ENCODE measurements at regions of chr12 and their contacts with region 1.

Region 1: DNA sequence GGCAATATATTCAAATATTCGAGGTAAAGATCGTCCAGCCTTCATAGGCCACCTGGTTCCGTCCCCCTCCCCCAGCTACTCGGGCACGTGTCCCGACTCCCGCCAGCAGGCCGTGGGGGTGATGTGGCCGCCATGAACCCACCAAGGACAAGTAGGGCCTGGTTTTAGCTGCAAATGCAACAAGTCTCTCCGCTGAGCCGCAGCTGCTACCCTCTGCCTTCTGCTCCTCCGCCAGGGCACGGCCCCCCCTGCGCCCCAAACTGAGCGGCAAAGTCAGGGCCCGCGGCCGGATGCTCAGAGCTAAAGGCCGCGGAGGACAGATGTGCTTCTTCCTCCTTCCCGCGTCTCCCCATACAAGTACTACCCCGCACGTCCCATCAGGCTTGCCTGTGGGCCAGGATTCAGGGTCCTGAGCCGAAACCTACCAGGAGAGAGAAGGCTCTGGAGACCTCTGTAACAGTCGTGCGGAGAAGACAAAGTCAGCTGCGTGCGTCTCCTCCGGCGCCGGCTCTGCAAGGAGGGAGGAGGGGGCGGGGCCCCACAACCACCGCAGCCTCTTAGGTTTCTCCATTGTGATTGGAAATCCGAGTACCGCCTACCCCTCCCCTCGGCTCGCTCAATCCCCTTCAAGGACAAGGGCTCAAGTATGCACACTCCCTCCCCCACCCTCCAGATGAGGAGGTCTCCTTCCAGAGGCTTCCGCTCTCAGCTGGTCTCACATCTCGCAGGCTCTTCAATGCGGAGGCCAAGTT is at the start of gene LDHB:
- DNase-seq: peak; percentile 97
- H3K4me3 ChIP-seq: peak within 1 kb of the TSS; percentile 83 to 89 (median 85)
- H3K27ac ChIP-seq: peak within 1 kb of the TSS; percentile 83
- H3K4me1 ChIP-seq: peaks cover 14% of the 10 kb centered on the region
- H3K27me3 ChIP-seq: peaks cover 2 to 9% of the 10 kb centered on the region in 2 experiments
- CTCF ChIP-seq: no peak
- POLR2A ChIP-seq: peak; percentile 98
- total RNA-seq, gene LDHB: 670 and 703 TPM in 2 replicates

Region 2: DNA sequence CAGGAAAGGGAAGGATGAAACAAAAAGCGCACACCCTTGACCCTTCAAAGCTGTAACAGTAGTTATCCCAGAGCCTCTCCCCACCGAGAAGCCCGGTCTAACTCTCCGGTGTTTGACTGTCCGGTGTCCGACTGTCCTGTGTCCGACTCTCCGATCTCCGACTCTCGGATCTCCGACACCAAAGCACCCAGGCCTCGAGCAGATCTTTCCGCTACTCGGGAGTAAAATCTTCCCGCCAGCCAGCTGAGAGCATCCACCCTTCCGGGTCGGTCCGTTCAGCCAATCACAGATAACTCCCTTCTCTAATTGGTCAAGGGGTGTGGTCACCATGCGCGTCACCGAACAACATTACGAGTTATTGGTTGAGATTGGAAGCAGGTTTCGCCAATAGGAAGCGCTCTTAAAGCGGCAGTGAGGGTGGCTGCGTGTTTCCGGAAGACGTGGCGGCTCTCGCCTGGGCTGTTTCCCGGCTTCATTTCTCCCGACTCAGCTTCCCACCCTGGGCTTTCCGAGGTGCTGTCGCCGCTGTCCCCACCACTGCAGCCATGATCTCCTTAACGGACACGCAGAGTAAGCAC is 156.0 kb before region 1 on chr12 and contains the starts of genes GOLT1B and RECQL:
- CTCF ChIA-PET with region 1: no interaction called
- POLR2A ChIA-PET with region 1: interaction called, 4 read pairs
- dilution Hi-C with region 1: no loop called
- intact Hi-C with region 1: loop called (anchors 1 kb)
- DNase-seq: peak; percentile 99
- H3K4me3 ChIP-seq: peak within 1 kb of the TSS; percentile 80 to 92 (median 88)
- H3K27ac ChIP-seq: peak within 1 kb of the TSS; percentile 87
- H3K4me1 ChIP-seq: peaks cover 31% of the 10 kb centered on the region
- H3K27me3 ChIP-seq: no peaks in the 10 kb centered on the region
- CTCF ChIP-seq: no peak
- POLR2A ChIP-seq: peak; percentile 90
- total RNA-seq, gene GOLT1B: 50.5 and 59.4 TPM in 2 replicates
- total RNA-seq, gene RECQL: 50.3 and 51.4 TPM in 2 replicates

Region 3: DNA sequence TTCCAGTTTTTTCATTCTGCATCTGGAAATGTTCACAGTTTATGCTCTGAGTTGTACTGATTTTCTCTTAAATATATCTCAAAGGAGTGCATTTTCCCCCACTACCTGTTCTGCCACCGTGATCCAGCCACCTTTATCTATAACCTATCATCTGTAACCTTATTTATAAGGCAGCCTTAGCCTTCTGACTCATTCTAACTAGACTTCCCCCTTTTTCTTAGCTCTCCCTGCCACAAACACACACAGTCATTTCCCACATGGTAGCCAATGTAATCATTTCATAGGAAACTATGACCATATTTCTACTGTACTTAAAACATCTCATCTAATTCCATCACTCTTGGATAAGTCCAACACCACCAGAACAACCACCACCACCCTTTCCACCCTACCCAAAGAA is 42.1 kb before region 1 on chr12:
- CTCF ChIA-PET with region 1: no interaction called
- POLR2A ChIA-PET with region 1: no interaction called
- dilution Hi-C with region 1: no loop called
- intact Hi-C with region 1: loop called (anchors 1 kb)
- DNase-seq: peak; percentile 92
- H3K4me3 ChIP-seq: no peak overlapping the region
- H3K27ac ChIP-seq: peak overlapping the region; percentile 37
- H3K4me1 ChIP-seq: peaks cover 22% of the 10 kb centered on the region
- H3K27me3 ChIP-seq: no peaks in the 10 kb centered on the region
- CTCF ChIP-seq: no peak
- POLR2A ChIP-seq: no peak

Region 4: DNA sequence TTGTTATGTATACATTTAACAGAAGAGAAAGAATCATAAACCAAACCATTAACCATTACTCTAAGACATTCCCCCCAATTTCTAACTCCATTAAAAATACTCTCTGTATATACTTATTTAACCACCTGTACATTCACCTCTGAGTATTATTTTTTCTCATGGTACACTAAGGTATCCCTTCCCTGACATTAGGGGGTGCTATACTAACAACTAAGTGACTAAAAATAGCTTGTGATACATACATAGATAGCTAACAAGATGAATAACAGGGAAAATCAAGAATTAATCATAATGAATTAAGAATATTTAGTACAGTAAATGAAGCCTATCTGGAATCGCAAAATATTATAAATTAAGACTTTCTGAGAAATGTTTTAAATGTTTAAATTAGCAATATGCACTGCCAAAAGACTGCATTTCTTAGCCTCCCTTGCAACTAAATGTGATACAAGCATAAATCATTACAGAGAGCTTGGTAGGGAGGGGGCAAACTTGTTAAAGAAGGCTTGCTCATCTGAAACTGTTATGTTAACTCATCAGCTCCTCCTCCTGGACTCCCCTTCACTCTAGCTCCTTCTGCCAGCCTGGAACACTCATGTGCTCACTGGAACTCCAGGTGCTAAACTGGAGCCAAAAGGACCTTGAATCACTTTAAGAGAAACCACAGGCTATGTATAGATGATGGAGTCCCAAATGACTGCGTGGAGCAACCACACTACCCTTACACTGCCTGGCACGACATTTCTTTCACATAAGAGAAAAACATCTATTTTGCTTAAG is 872.0 kb after region 1 on chr12:
- CTCF ChIA-PET with region 1: no interaction called
- POLR2A ChIA-PET with region 1: no interaction called
- dilution Hi-C with region 1: no loop called
- intact Hi-C with region 1: loop called (anchors 10 kb)
- DNase-seq: peak; percentile 36
- H3K4me3 ChIP-seq: no peak overlapping the region
- H3K27ac ChIP-seq: peak overlapping the region; percentile 75
- H3K4me1 ChIP-seq: peaks cover 43% of the 10 kb centered on the region
- H3K27me3 ChIP-seq: no peaks in the 10 kb centered on the region
- CTCF ChIP-seq: peak in 1 of 2 donors; percentile 15
- POLR2A ChIP-seq: no peak